ENCODE measurements at regions of chr6 and their contacts with region 1.

Region 1: GRCh38 chr6:13924949-13925881 is at the start of gene RNF182:
- DNase-seq: no peak
- H3K4me3 ChIP-seq: peak within 1 kb of the TSS; percentile 43 to 46 (median 44)
- H3K27ac ChIP-seq: no peak within 1 kb of the TSS
- H3K4me1 ChIP-seq: peaks cover 5% of the 10 kb centered on the region
- H3K27me3 ChIP-seq: peaks cover 29% of the 10 kb centered on the region
- CTCF ChIP-seq: no peak
- total RNA-seq, gene RNF182: 0.33 TPM in 1 of 2 donors, not detected in the other

Region 2: GRCh38 chr6:14046476-14047068 is 121.4 kb after region 1 on chr6:
- CTCF ChIA-PET with region 1: no interaction called
- dilution Hi-C with region 1: no loop called
- in situ Hi-C with region 1: no loop called
- intact Hi-C with region 1: loop called (anchors 5 kb)
- DNase-seq: peak; percentile 39
- H3K4me3 ChIP-seq: no peak overlapping the region
- H3K27ac ChIP-seq: no peak overlapping the region
- H3K4me1 ChIP-seq: no peaks in the 10 kb centered on the region
- H3K27me3 ChIP-seq: no peaks in the 10 kb centered on the region
- CTCF ChIP-seq: peak; percentile 88 to 91